Caco-2 (cell line): ENCODE measurements at regions of chr2 and their contacts with region 1.

Region 1: GRCh38 chr2:20661067-20661980 is 5.6 kb upstream of the GDF7 start:
- DNase-seq: peak; percentile 77 to 83
- H3K4me3 ChIP-seq: no peak overlapping the region
- H3K4me3 Mint-ChIP-seq: no peak overlapping the region
- H3K27ac Mint-ChIP-seq: no peak overlapping the region
- H3K4me1 ChIP-seq: peaks cover 10% of the 10 kb centered on the region; the same call in 1 of the 2 replicates
- H3K4me1 Mint-ChIP-seq: no peaks in the 10 kb centered on the region
- H3K27me3 ChIP-seq: no peaks in the 10 kb centered on the region
- H3K27me3 Mint-ChIP-seq: peaks cover 4% of the 10 kb centered on the region
- CTCF ChIP-seq: peak; percentile 95 to 96

Region 2: DNA sequence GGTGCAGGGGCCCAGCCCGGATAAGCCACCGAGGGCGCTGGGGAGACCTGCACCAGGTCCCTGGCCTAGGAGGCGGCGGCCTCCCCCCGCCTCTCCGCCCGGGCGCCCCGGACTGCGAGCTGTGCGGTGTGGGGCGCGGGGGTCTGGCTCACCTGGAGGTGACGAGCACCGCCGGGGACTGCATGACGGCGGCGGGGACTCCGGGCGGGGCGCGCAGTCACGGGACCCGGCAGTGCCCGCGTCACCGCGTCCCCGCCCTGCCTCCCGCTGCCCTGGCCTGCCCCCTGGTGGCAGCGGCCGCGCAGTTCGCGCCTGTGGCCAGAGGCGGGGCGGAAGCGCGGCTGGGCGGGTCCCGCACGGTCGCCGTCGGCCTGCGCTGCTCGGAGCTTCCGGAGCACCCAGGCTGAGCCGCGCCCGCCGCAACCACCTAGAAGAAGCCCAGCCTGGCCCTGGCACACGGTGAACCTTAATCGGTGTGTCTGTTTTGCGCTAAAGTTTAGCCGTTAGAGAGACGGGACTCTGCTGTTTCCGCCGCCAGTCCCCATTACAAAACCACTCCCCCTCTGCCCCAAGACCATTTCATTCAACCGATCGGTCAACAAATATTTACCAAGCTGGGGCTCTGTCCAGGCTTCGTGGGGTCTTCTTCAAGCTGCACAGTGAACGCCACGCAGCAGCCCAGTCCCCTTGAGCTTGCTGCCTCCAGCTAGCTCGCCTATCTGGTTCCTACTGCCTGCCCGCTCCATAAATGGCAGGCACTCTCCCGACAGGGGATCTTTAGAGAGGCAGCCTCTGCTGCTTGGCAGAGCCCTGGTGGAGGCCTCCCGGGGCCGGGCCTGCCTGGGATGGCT is 10.2 kb before region 1 on chr2 and contains the start of gene HS1BP3:
- CTCF ChIA-PET with region 1: interaction called, 28 read pairs
- POLR2A ChIA-PET with region 1: interaction called, 3 read pairs
- intact Hi-C with region 1: no loop called
- DNase-seq: peak; percentile 80 to 96
- H3K4me3 ChIP-seq: peak within 1 kb of the TSS; percentile 92
- H3K4me3 Mint-ChIP-seq: peak within 1 kb of the TSS; percentile 81
- H3K27ac Mint-ChIP-seq: peak within 1 kb of the TSS; percentile 81
- H3K4me1 ChIP-seq: peaks cover 13% of the 10 kb centered on the region
- H3K4me1 Mint-ChIP-seq: peaks cover 7% of the 10 kb centered on the region
- H3K27me3 ChIP-seq: no peaks in the 10 kb centered on the region
- H3K27me3 Mint-ChIP-seq: no peaks in the 10 kb centered on the region
- CTCF ChIP-seq: peak; percentile 55 to 95
- total RNA-seq, gene HS1BP3: 26.5 and 31.1 TPM in 2 replicates

Region 3: DNA sequence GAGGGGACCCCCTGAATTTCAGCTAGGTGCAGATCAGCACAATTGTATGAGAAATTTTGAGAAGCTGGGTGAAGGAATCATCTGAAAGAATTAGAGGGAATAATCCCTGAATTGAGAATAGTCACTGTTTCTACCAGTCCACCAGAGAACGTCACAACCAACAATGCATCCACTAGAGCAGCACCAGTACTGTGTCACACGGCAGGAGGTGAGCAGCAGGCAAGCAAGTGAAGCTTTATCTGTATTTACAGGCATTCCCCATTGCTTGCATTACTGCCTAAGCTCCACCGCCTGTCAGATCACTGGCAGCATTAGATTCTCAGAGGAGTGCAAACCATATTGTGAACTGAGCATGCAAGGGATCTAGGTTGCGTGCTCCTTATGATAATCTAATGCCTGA is 46.3 kb after region 1 on chr2:
- CTCF ChIA-PET with region 1: no interaction called
- POLR2A ChIA-PET with region 1: no interaction called
- intact Hi-C with region 1: no loop called
- DNase-seq: no peak
- H3K4me3 ChIP-seq: no peak overlapping the region
- H3K4me3 Mint-ChIP-seq: no peak overlapping the region
- H3K27ac Mint-ChIP-seq: no peak overlapping the region
- H3K4me1 ChIP-seq: peaks cover 6% of the 10 kb centered on the region; the same call in 1 of the 2 replicates
- H3K4me1 Mint-ChIP-seq: peaks cover 11% of the 10 kb centered on the region
- H3K27me3 ChIP-seq: no peaks in the 10 kb centered on the region
- H3K27me3 Mint-ChIP-seq: no peaks in the 10 kb centered on the region
- CTCF ChIP-seq: no peak

Region 4: DNA sequence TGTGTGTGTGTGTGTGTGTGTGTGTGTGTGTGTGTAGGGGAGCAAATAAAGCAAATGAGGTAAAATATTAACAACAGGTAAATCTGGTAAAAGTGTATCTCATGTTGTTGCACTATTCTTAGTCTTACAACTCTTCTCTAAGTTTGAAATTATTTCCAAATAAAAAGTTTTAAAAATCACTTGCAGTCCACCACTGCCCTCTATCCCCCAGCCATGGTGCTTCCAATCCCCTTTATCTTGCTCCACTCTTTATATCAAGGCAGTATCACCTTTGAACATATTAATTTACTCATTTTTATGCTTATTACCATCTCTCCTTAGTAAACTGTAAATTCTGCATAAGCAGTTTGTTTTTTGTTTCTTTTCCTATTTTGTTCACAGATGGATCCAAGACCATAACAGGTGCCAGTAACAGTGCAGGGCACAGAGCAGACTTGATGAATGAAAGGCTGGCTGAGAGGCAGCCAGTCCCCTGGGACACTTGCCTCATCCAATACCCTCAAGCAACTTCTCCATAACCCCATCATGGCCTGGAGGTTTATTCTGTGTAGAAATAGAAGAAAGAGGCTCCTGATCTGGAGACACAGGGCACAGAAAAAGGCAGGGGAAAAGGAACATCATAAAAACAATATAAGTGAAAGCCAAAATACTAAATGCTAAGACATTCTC is 93.9 kb after region 1 on chr2:
- CTCF ChIA-PET with region 1: interaction called, 3 read pairs
- POLR2A ChIA-PET with region 1: no interaction called
- intact Hi-C with region 1: loop called (anchors 1 kb)
- DNase-seq: no peak
- H3K4me3 ChIP-seq: no peak overlapping the region
- H3K4me3 Mint-ChIP-seq: no peak overlapping the region
- H3K27ac Mint-ChIP-seq: no peak overlapping the region
- H3K4me1 ChIP-seq: 0 out of 2 replicates have a peak, but pooled peaks cover 4% of the 10 kb centered on the region
- H3K4me1 Mint-ChIP-seq: peaks cover 7% of the 10 kb centered on the region
- H3K27me3 ChIP-seq: no peaks in the 10 kb centered on the region
- H3K27me3 Mint-ChIP-seq: no peaks in the 10 kb centered on the region
- CTCF ChIP-seq: no peak

Region 5: DNA sequence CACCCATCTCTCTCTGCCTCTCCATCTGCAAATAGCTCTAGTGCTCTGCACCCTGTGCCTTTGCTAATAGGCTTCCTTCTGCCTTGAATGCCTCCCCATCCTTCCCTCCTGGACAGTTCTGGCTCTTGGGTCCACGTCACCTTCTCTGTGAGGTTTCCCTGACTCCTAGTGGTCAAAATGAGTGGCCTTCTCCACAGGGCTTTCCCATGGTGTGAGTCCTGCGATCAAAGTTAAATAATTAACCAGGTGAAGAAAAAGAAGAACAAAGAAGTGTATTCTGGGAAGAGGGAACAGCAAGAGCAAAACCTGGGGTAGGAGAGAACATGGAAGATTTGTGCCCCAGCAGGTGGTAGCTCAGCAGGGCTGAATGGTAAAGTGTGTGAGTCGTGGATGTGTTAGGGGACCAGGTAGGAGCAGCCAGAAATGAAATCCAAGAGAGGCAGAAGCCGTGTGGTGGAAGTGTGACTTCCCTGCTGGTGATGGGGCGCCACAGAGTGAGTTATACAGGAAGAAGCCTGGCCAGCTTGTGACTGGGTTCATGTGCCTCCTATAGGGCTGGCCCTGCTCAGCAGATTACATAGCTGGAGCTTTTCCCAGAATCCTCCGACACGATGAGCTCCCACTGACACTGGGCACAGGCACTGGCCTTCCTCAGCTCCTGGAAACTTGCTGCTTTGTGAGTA is 255.4 kb after region 1 on chr2:
- CTCF ChIA-PET with region 1: interaction called, 8 read pairs
- POLR2A ChIA-PET with region 1: no interaction called
- intact Hi-C with region 1: loop called (anchors 1 kb)
- DNase-seq: peak; percentile 62 to 64
- H3K4me3 ChIP-seq: no peak overlapping the region
- H3K4me3 Mint-ChIP-seq: no peak overlapping the region
- H3K27ac Mint-ChIP-seq: no peak overlapping the region
- H3K4me1 ChIP-seq: no peaks in the 10 kb centered on the region
- H3K4me1 Mint-ChIP-seq: peaks cover 7% of the 10 kb centered on the region
- H3K27me3 ChIP-seq: no peaks in the 10 kb centered on the region
- H3K27me3 Mint-ChIP-seq: peaks cover 8% of the 10 kb centered on the region
- CTCF ChIP-seq: peak; percentile 49 to 78

Region 6: GRCh38 chr2:21118302-21118920 is 457.1 kb after region 1 on chr2:
- CTCF ChIA-PET with region 1: no interaction called
- POLR2A ChIA-PET with region 1: no interaction called
- intact Hi-C with region 1: loop called (anchors 1 kb)
- DNase-seq: peak; percentile 60 to 66
- H3K4me3 ChIP-seq: no peak overlapping the region
- H3K4me3 Mint-ChIP-seq: no peak overlapping the region
- H3K27ac Mint-ChIP-seq: no peak overlapping the region
- H3K4me1 ChIP-seq: no peaks in the 10 kb centered on the region
- H3K4me1 Mint-ChIP-seq: peaks cover 6% of the 10 kb centered on the region
- H3K27me3 ChIP-seq: no peaks in the 10 kb centered on the region
- H3K27me3 Mint-ChIP-seq: no peaks in the 10 kb centered on the region
- CTCF ChIP-seq: peak; percentile 72 to 74